SK-N-SH (cell line): ENCODE measurements at regions of chr7 and their contacts with region 1.

Region 1: GRCh38 chr7:23546897-23547572 is 15.3 kb upstream of the TRA2A start:
- DNase-seq: peak; percentile 83
- H3K4me3 ChIP-seq: no peak overlapping the region
- H3K27ac ChIP-seq: no peak overlapping the region
- H3K4me1 ChIP-seq: no peaks in the 10 kb centered on the region
- H3K27me3 ChIP-seq: no peaks in the 10 kb centered on the region; the same call in 1 of the 2 replicates
- CTCF ChIP-seq: peak; percentile 100
- EP300 ChIP-seq: no peak
- RAD21 ChIP-seq: peak; percentile 97

Region 2: GRCh38 chr7:23168111-23168885 is 378.7 kb before region 1 on chr7:
- CTCF ChIA-PET with region 1: no interaction called
- POLR2A ChIA-PET with region 1: no interaction called
- DNase-seq: no peak
- H3K4me3 ChIP-seq: no peak overlapping the region
- H3K27ac ChIP-seq: no peak overlapping the region
- H3K4me1 ChIP-seq: no peaks in the 10 kb centered on the region
- H3K27me3 ChIP-seq: no peaks in the 10 kb centered on the region
- CTCF ChIP-seq: no peak
- EP300 ChIP-seq: no peak
- RAD21 ChIP-seq: no peak

Region 3: GRCh38 chr7:23533160-23533559 is 13.9 kb before region 1 on chr7:
- CTCF ChIA-PET with region 1: interaction called, 14 read pairs
- POLR2A ChIA-PET with region 1: no interaction called
- DNase-seq: no peak
- H3K4me3 ChIP-seq: no peak overlapping the region
- H3K27ac ChIP-seq: no peak overlapping the region
- H3K4me1 ChIP-seq: peaks cover 6 to 8% of the 10 kb centered on the region in 2 experiments; a peak in 3 of 4 replicates
- H3K27me3 ChIP-seq: no peaks in the 10 kb centered on the region
- CTCF ChIP-seq: peak; percentile 47
- EP300 ChIP-seq: no peak
- RAD21 ChIP-seq: no peak

Region 4: GRCh38 chr7:23570592-23571200 is 23.7 kb after region 1 on chr7:
- CTCF ChIA-PET with region 1: interaction called, 45 read pairs
- POLR2A ChIA-PET with region 1: no interaction called
- DNase-seq: peak; percentile 88
- H3K4me3 ChIP-seq: no peak overlapping the region; a peak in 1 of 4 replicates
- H3K27ac ChIP-seq: no peak overlapping the region
- H3K4me1 ChIP-seq: no peaks in the 10 kb centered on the region; a peak in 1 of 4 replicates
- H3K27me3 ChIP-seq: no peaks in the 10 kb centered on the region
- CTCF ChIP-seq: peak; percentile 98
- EP300 ChIP-seq: no peak
- RAD21 ChIP-seq: peak; percentile 100

Region 5: DNA sequence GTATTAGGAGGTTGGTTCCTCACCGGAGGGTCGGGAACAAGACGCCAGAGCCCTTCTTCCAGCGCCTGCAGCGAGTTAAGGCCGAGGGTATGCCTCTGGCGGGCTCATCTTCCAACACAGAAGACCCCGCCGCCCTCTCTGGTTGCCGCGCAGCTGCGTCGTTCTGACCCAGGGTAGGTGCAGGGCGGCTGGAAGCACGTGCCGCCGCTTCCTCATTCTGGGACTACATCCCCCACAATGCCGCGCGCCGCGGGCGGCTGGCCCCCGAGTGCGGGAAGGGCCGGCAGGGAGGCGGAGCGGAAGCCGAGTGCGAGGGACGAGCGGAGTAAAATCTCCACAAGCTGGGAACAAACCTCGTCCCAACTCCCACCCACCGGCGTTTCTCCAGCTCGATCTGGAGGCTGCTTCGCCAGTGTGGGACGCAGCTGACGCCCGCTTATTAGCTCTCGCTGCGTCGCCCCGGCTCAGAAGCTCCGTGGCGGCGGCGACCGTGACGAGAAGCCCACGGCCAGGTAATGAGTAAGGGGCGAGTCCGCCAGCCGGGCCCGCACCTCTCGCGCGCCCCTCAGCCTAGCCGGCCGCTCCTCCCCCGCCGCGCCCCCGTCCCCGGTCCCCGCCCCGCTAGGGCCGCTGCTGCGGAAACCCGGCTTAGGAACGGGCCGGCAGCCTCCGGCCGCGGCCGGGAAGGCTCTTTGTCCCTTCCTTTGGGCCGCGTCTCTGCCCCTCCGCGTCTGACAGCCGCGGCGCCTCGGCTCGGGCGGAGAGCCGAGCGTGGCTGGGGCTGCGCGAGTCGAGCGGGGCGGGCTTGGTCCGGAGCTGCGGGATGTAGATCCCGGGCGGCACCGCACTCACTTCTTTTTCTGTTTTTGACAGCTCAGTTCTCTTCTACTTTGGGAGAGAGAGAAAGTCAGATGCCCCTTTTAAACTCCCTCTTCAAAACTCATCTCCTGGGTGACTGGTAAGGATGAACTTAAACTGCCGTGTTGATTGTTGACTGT is 50.4 kb after region 1 on chr7 and contains the start of gene CCDC126:
- CTCF ChIA-PET with region 1: interaction called, 15 read pairs
- POLR2A ChIA-PET with region 1: no interaction called
- DNase-seq: peak; percentile 98
- H3K4me3 ChIP-seq: peak within 1 kb of the TSS; percentile 73 to 77
- H3K27ac ChIP-seq: peak within 1 kb of the TSS; percentile 87 to 90
- H3K4me1 ChIP-seq: peaks cover 0 to 10% of the 10 kb centered on the region in 2 experiments; a peak in 2 of 4 replicates
- H3K27me3 ChIP-seq: no peaks in the 10 kb centered on the region
- CTCF ChIP-seq: no peak
- EP300 ChIP-seq: peak in 1 of 2 experiments; percentile 6; a peak in 1 of 4 replicates
- RAD21 ChIP-seq: no peak
- polyA plus RNA-seq, gene CCDC126: 5.5 and 6.8 TPM in 2 replicates

Region 6: DNA sequence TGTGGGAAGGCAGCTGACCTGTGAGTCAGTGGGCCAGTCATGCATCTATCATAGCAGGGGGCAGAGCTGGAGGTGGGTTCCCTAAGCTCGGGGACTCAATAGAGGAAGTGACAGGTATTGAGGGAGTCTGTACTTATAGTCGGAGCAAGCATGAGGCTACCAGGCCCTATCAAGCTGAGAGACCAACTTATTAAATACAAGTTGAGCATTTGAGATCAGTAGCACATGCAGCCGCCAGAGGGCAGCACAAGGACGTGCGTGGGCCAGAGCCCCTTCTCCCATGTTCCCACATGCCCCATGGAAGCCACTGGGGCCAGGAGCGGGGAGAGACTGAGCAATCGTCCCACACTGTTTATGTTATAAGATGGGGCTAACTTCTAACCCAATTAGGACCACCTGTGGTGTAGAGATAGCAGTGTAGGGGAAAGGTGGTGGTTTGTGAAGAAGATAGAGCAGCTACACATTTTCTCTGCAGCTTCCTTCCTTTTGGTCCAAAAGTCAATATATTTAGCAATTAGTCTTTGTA is 149.9 kb after region 1 on chr7:
- CTCF ChIA-PET with region 1: interaction called, 28 read pairs
- POLR2A ChIA-PET with region 1: no interaction called
- DNase-seq: peak; percentile 61
- H3K4me3 ChIP-seq: no peak overlapping the region
- H3K27ac ChIP-seq: no peak overlapping the region
- H3K4me1 ChIP-seq: no peaks in the 10 kb centered on the region
- H3K27me3 ChIP-seq: no peaks in the 10 kb centered on the region
- CTCF ChIP-seq: peak; percentile 77
- EP300 ChIP-seq: no peak
- RAD21 ChIP-seq: peak; percentile 54

Region 7: GRCh38 chr7:23721456-23721855 is 174.4 kb after region 1 on chr7:
- CTCF ChIA-PET with region 1: interaction called, 26 read pairs
- POLR2A ChIA-PET with region 1: no interaction called
- DNase-seq: no peak
- H3K4me3 ChIP-seq: no peak overlapping the region
- H3K27ac ChIP-seq: no peak overlapping the region
- H3K4me1 ChIP-seq: no peaks in the 10 kb centered on the region
- H3K27me3 ChIP-seq: no peaks in the 10 kb centered on the region
- CTCF ChIP-seq: no peak
- EP300 ChIP-seq: no peak
- RAD21 ChIP-seq: no peak

Region 8: GRCh38 chr7:24349339-24349738 is 802.3 kb after region 1 on chr7:
- CTCF ChIA-PET with region 1: no interaction called
- POLR2A ChIA-PET with region 1: no interaction called
- DNase-seq: peak; percentile 12
- H3K4me3 ChIP-seq: no peak overlapping the region
- H3K27ac ChIP-seq: no peak overlapping the region
- H3K4me1 ChIP-seq: peaks cover 0 to 9% of the 10 kb centered on the region in 2 experiments; a peak in 1 of 4 replicates
- H3K27me3 ChIP-seq: no peaks in the 10 kb centered on the region
- CTCF ChIP-seq: no peak
- EP300 ChIP-seq: no peak
- RAD21 ChIP-seq: no peak